ENCODE measurements at regions of chr16 and their contacts with region 1.

Region 1: GRCh38 chr16:47460711-47461597 is at the starts of genes ITFG1 and PHKB:
- DNase-seq: peak; percentile 92
- ATAC-seq: peak; percentile 89
- H3K4me3 ChIP-seq: peak within 1 kb of the TSS; percentile 82 to 100 (median 99)
- H3K27ac ChIP-seq: peak within 1 kb of the TSS; percentile 99
- H3K4me1 ChIP-seq: peaks cover 65% of the 10 kb centered on the region
- H3K27me3 ChIP-seq: no peaks in the 10 kb centered on the region; a peak in 1 of 5 replicates
- CTCF ChIP-seq: peak; percentile 22; the same call in 1 of the 2 replicates
- EP300 ChIP-seq: peak in 1 of 2 experiments; percentile 68; a peak in 1 of 4 replicates
- POLR2A ChIP-seq: peak; percentile 80 to 86; a peak in 3 of 4 replicates
- RAD21 ChIP-seq: peak; percentile 78
- total RNA-seq, gene ITFG1: 43.7 and 74.5 TPM in 2 replicates
- total RNA-seq, gene PHKB: 66.0 and 95.1 TPM in 2 replicates

Region 2: GRCh38 chr16:47392081-47392480 is 68.9 kb before region 1 on chr16:
- CTCF ChIA-PET with region 1: no interaction called
- POLR2A ChIA-PET with region 1: no interaction called
- in situ Hi-C with region 1: no loop called
- intact Hi-C with region 1: no loop called
- DNase-seq: peak; percentile 53
- ATAC-seq: peak; percentile 67
- H3K4me3 ChIP-seq: no peak overlapping the region
- H3K27ac ChIP-seq: no peak overlapping the region
- H3K4me1 ChIP-seq: peaks cover 42% of the 10 kb centered on the region
- H3K27me3 ChIP-seq: no peaks in the 10 kb centered on the region
- CTCF ChIP-seq: no peak
- EP300 ChIP-seq: 0 out of 4 replicates have a peak, but pooled peaks of 1 of the 2 experiments have one; percentile 10
- POLR2A ChIP-seq: no peak
- RAD21 ChIP-seq: no peak

Region 3: DNA sequence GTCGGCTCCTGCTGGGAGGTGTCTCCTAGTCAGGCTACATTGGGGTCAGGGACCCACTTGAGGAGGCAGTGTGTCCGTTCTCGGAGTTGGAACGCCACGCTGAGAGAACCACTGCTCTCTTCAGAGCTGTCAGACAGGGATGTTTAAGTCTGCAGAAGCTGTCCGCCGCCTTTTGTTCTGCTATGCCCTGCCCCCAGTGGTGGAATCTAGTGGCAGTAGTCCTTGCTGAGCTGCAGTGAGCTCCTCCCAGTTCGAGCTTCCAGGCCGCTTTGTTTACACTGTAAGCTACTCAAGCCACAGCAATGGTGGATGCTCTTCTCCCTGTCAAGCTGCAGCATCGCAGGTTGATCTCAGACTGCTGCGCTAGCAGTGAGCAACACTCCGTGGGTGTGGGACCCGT is 36.1 kb before region 1 on chr16:
- CTCF ChIA-PET with region 1: no interaction called
- POLR2A ChIA-PET with region 1: no interaction called
- in situ Hi-C with region 1: no loop called
- intact Hi-C with region 1: no loop called
- DNase-seq: peak; percentile 39
- ATAC-seq: peak; percentile 85
- H3K4me3 ChIP-seq: no peak overlapping the region
- H3K27ac ChIP-seq: no peak overlapping the region
- H3K4me1 ChIP-seq: no peaks in the 10 kb centered on the region
- H3K27me3 ChIP-seq: no peaks in the 10 kb centered on the region
- CTCF ChIP-seq: peak; percentile 17; the same call in 1 of the 2 replicates
- EP300 ChIP-seq: no peak
- POLR2A ChIP-seq: no peak
- RAD21 ChIP-seq: no peak

Region 4: DNA sequence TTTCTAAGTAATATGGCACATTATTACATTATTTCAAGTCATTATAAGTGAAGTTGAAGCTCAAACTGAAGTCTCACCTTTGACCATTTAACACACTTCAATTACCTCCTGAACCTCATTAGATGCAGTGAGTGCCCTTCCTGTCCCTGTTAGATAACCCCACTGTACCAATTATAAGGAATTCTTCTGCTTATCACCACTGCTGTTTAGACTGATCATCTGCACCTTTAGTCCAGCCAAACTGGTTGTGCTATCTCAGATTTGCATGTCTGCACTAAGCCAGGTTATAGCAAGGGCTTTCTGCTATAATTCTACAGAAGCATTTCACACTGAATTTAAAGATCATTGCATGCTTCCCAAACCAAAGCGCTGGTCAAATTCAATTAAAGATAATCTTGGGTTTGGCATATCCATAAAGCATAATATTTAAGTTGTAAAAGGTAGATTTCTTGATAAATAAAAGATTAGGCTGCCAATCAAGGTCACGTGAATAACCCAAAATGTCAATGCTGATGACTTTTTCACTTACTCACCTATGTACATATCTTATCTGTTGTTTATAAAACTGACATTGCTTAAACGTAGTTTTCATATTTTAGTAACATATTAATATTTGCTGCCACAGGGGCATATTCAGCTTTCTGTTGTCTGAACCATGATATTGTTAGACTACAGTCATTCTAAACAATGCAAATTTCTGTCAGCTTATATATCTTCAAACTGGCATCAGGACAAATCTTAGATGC is 12.0 kb before region 1 on chr16:
- CTCF ChIA-PET with region 1: no interaction called
- POLR2A ChIA-PET with region 1: interaction called, 17 read pairs
- in situ Hi-C with region 1: no loop called
- intact Hi-C with region 1: no loop called
- DNase-seq: no peak
- ATAC-seq: no peak
- H3K4me3 ChIP-seq: no peak overlapping the region
- H3K27ac ChIP-seq: no peak overlapping the region
- H3K4me1 ChIP-seq: peaks cover 19% of the 10 kb centered on the region
- H3K27me3 ChIP-seq: no peaks in the 10 kb centered on the region
- CTCF ChIP-seq: no peak
- EP300 ChIP-seq: no peak
- POLR2A ChIP-seq: no peak
- RAD21 ChIP-seq: no peak

Region 5: DNA sequence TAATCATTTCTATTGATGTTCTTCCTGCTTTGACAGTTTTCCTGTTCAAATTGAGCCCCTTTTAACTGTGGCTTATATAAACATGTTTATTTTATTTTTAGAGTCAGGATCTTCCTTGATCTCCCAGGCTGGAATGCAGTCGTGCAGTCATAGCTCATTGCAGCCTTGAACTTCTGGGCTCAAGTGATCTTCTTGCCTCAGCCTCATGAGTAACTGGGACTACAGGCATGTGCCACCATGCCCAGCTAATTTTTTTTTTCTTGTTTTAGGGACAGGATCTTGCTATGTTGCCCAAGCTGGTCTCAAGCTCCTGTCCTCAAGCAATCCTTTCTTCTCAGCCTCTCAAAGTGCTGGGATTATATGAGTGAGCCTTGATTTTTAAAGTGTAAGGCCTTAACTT is 14.8 kb after region 1 on chr16:
- CTCF ChIA-PET with region 1: no interaction called
- POLR2A ChIA-PET with region 1: interaction called, 37 read pairs
- in situ Hi-C with region 1: no loop called
- intact Hi-C with region 1: no loop called
- DNase-seq: peak; percentile 93
- ATAC-seq: peak; percentile 86
- H3K4me3 ChIP-seq: no peak overlapping the region
- H3K27ac ChIP-seq: peak overlapping the region; percentile 74
- H3K4me1 ChIP-seq: peaks cover 62% of the 10 kb centered on the region
- H3K27me3 ChIP-seq: no peaks in the 10 kb centered on the region
- CTCF ChIP-seq: no peak
- EP300 ChIP-seq: peak in 1 of 2 experiments; percentile 86; a peak in 3 of 4 replicates
- POLR2A ChIP-seq: no peak
- RAD21 ChIP-seq: no peak

Region 6: DNA sequence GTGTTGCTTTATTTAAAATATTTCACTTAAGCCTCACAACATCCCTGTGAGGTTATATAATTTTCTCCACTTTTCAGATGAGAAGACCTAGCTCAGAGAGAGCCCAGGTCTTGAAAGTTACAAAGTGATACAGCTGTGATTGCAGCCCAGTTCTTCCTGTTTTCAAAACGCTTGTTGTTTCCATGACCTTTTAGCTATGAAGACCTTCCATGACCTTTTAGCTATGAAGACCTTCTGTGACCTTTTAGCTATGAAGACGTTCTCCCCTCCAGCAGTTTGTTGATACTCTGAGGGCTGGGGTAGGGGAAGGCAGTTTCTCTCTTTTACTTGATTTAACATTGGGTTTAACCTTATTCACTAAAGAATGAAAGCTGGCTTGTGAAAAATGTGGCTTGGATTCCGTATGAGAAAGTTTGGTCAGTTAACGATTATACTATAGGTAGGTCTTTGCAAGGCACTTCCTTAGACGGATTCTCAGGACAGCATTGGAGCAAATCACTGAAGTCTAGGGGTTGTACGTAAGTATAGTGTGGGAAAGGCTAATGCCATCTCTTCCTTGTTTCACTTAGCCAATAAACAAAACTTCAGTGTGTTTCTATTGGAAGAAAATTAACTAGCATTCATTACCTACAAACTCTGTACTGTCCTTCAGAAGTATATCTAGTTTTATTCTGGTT is 20.9 kb after region 1 on chr16:
- CTCF ChIA-PET with region 1: no interaction called
- POLR2A ChIA-PET with region 1: interaction called, 37 read pairs
- in situ Hi-C with region 1: no loop called
- intact Hi-C with region 1: no loop called
- DNase-seq: no peak
- ATAC-seq: no peak
- H3K4me3 ChIP-seq: no peak overlapping the region
- H3K27ac ChIP-seq: no peak overlapping the region
- H3K4me1 ChIP-seq: peaks cover 42% of the 10 kb centered on the region
- H3K27me3 ChIP-seq: no peaks in the 10 kb centered on the region
- CTCF ChIP-seq: no peak
- EP300 ChIP-seq: no peak
- POLR2A ChIP-seq: no peak
- RAD21 ChIP-seq: no peak

Region 7: DNA sequence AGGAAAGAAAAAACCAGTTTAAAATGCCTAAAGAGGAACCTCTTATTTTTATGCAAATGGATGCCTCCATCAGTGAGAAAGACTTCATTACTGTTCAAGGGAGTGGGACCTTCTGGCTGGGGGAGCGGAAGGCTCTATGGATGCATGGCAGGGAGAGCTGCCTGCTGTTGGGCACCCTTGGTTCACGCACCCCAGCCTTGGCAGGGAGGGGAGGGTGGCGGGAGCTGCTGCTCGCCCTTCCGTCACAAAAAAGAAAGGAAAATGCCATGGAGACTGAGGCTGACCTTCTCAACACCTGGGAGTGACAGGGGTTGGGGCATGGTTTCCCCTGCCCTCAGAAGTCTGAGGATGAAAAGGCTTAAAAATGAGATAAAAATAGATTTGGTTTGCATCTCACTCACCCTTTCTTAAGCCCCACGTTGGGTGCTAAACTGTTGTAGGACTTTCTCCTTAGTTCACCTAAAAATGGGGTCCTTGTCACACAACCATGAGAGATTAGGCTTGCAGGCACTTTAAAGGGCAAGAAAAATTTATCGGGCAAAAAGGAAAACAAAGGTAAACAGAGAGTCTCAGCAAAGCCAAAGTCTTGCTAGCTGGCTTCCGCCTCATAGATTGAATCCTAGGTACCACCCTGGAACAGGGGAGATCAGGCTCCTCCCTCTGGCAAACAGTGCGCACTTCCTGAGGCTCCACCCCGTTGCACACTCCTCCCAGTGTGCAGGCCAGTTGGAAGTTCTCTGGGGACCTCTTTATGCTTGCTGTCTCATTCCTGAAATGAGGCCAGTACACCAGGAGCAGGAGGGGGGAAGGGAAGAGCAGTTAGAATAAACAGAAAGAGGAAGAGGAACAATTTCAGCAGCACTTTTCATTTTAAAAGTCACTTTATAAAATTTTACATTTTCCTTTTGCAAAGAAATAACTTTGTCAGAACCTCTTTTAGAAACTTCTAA is 31.7 kb after region 1 on chr16:
- CTCF ChIA-PET with region 1: no interaction called
- POLR2A ChIA-PET with region 1: interaction called, 23 read pairs
- in situ Hi-C with region 1: no loop called
- intact Hi-C with region 1: no loop called
- DNase-seq: peak; percentile 92
- ATAC-seq: peak; percentile 100
- H3K4me3 ChIP-seq: peak overlapping the region in 2 of 3 experiments; percentile 13 to 32; a peak in 2 of 6 replicates
- H3K27ac ChIP-seq: peak overlapping the region; percentile 65
- H3K4me1 ChIP-seq: peaks cover 51% of the 10 kb centered on the region
- H3K27me3 ChIP-seq: no peaks in the 10 kb centered on the region
- CTCF ChIP-seq: peak; percentile 33
- EP300 ChIP-seq: no peak
- POLR2A ChIP-seq: peak; percentile 26 to 59; a peak in 3 of 4 replicates
- RAD21 ChIP-seq: peak; percentile 30; the same call in 1 of the 2 replicates

Region 8: DNA sequence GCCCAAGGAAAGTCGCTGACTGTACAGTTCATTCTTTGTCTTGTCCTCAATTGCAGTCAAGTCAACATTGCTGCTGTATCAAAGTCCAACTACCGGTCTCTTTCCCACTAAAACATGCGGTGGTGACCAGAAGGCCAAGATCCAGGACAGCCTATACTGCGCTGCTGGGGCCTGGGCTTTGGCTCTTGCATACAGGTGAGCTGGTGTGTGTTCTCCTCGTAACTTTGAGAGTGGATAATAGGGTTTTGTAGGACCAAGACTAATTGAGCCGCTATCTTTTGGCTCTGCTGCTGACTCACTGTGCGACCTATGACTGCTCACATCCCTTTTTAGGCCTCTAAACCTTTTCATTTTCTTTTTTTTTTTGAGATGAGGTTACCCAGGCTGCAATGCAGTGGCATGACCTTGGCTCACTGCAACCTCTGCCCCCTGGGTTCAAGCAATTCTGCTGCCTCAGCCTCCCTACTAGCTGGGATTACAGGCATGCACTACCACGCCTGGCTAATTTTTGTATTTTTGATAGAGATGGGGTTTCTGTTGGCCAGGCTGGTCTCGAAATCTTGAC is 38.8 kb after region 1 on chr16:
- CTCF ChIA-PET with region 1: no interaction called
- POLR2A ChIA-PET with region 1: interaction called, 23 read pairs
- in situ Hi-C with region 1: no loop called
- intact Hi-C with region 1: loop called (anchors 2 kb)
- DNase-seq: peak; percentile 96
- ATAC-seq: peak; percentile 100
- H3K4me3 ChIP-seq: peak overlapping the region in 1 of 3 experiments; percentile 19; a peak in 1 of 6 replicates
- H3K27ac ChIP-seq: peak overlapping the region; percentile 86
- H3K4me1 ChIP-seq: peaks cover 43% of the 10 kb centered on the region
- H3K27me3 ChIP-seq: no peaks in the 10 kb centered on the region
- CTCF ChIP-seq: no peak
- EP300 ChIP-seq: peak in 1 of 2 experiments; percentile 85; a peak in 2 of 4 replicates
- POLR2A ChIP-seq: peak in 1 of 2 experiments; percentile 49; a peak in 1 of 4 replicates
- RAD21 ChIP-seq: peak; percentile 35; the same call in 1 of the 2 replicates

Region 9: DNA sequence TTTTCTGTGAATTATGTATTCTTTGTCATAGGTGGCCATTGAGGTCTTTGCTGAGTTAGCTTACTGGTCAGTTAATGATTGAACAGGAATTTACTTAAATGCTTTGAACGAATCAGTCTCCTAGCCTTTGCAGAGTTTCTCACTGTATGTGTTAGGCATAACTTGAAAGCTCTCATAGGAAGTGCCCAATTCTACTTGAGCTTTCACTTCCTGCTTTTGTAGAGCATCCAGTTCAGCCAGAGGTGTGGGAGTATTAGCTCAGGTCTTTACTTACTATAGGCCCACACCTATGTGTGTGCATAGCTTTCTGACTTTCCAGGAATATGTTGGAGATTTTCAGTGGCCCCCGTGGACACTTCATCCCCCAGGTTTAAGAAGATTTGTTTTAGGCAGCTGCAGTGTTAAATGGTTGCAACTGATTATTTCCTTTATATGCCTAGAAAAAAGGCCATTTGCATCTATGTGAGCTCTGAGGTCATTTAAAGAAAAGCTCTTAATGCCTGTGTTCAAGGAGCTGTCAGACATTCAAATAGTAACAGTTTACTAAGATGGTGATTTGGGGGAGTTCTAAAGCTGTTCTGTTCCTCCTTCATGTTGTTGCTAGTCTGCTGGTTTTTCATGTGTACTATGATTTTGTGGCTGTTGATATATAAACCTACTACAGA is 62.5 kb after region 1 on chr16:
- CTCF ChIA-PET with region 1: no interaction called
- POLR2A ChIA-PET with region 1: interaction called, 17 read pairs
- in situ Hi-C with region 1: no loop called
- intact Hi-C with region 1: no loop called
- DNase-seq: peak; percentile 91
- ATAC-seq: peak; percentile 100
- H3K4me3 ChIP-seq: no peak overlapping the region; a peak in 1 of 6 replicates
- H3K27ac ChIP-seq: peak overlapping the region; percentile 30
- H3K4me1 ChIP-seq: peaks cover 22% of the 10 kb centered on the region
- H3K27me3 ChIP-seq: no peaks in the 10 kb centered on the region
- CTCF ChIP-seq: no peak
- EP300 ChIP-seq: peak in 1 of 2 experiments; percentile 22; a peak in 1 of 4 replicates
- POLR2A ChIP-seq: no peak
- RAD21 ChIP-seq: no peak